ENCODE measurements at regions of chr17 and their contacts with region 1.

Region 1: DNA sequence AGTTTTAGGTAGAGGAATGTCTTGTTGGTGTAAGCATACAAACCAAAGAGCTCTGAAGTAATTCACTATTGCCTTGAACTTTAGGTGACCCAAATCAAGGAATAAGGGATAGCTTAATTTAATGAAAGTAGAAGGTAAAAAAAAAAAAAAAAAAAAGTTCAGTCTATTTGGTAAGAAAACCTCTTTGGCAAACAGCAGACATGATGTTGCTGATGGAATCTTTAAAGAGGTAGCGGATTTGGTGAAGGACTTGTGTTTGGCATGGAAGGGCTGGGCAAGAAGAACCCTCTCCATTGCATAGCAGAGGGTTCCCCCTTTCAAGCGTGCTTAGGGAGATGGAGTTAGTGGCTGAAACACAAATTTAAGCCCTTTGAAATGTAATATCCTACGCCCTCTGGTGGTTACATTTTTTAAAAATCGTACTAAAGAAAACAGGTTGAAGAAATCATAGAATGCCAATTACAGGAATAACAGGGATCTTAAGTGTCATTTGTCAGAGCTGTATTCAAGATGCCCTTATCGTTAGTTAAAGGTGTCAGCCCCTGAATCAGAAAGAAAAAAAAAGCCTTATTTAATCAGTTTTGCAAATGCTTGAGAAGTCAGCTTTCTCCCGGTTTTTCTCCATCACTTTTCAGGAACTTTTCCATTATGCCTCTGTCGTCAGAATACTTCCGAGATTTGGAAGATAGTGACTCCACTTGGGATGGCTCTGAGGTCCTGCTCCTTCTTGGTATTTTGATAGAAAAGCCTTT is 383.1 kb downstream of the KCNJ2 start:
- DNase-seq: peak in 1 of 2 donors; percentile 8
- ATAC-seq: peak; percentile 55 to 83 (median 66)
- H3K4me3 ChIP-seq: peak overlapping the region in 3 of 10 donors; percentile 8 to 22 (median 20)
- H3K27ac ChIP-seq: peak overlapping the region in 2 of 10 donors; percentile 10 to 29
- H3K4me1 ChIP-seq: peaks cover 0 to 4% (median 0%) of the 10 kb centered on the region in 9 donors
- H3K27me3 ChIP-seq: no peaks in the 10 kb centered on the region
- CTCF ChIP-seq: peak; percentile 34 to 72 (median 60)

Region 2: GRCh38 chr17:69567130-69567529 is 985.3 kb before region 1 on chr17:
- intact Hi-C with region 1: loop called in 6 of 10 experiments (anchors 5 to 10 kb)
- DNase-seq: no peak
- ATAC-seq: no peak
- H3K4me3 ChIP-seq: no peak overlapping the region
- H3K27ac ChIP-seq: no peak overlapping the region
- H3K4me1 ChIP-seq: peaks cover 0 to 9% (median 0%) of the 10 kb centered on the region in 9 donors
- H3K27me3 ChIP-seq: no peaks in the 10 kb centered on the region
- CTCF ChIP-seq: no peak

Region 3: DNA sequence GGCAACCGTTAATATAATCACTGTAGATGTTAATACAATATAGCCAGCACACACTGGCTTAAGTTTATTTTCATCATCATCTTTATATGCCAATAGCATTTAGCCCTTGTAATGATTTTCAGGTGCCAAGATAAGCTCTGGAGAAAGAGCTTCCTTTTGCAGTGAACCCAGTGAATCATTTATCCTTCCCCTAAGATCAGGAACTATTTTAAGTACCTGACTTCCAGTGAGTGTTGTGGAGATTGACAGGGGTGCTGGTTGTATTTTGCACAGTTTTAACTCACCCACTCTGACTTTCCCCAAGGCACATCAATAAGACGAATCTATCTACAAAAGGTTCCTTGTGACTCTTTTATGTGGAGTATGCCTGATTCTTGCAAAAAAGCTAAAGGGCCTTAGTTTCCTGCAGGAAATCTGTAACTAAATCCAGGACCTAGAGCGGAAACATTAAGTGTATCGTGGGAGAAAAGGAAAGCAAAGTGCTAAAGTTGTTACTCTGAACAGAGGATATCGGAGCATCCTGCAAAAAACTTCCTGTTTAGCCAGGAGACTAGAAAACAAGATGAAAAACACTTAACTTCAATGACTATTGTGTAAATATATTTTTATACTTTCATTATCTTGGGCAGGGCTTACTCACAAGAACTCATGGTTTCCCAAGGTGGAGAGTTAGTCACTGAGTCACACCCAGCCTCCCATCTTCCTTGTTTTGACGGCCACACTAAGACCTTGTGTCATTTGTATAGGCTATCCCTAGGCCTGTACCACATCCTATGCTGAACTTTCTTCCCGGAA is 954.3 kb before region 1 on chr17:
- intact Hi-C with region 1: loop called in 3 of 10 experiments (anchors 10 kb)
- DNase-seq: no peak
- ATAC-seq: peak in 6 of 8 donors; percentile 23 to 89 (median 66)
- H3K4me3 ChIP-seq: no peak overlapping the region
- H3K27ac ChIP-seq: peak overlapping the region in 7 of 10 donors; percentile 23 to 62 (median 49)
- H3K4me1 ChIP-seq: peaks cover 0 to 15% (median 5%) of the 10 kb centered on the region in 9 donors
- H3K27me3 ChIP-seq: peaks cover 0 to 4% (median 0%) of the 10 kb centered on the region in 7 donors
- CTCF ChIP-seq: no peak

Region 4: DNA sequence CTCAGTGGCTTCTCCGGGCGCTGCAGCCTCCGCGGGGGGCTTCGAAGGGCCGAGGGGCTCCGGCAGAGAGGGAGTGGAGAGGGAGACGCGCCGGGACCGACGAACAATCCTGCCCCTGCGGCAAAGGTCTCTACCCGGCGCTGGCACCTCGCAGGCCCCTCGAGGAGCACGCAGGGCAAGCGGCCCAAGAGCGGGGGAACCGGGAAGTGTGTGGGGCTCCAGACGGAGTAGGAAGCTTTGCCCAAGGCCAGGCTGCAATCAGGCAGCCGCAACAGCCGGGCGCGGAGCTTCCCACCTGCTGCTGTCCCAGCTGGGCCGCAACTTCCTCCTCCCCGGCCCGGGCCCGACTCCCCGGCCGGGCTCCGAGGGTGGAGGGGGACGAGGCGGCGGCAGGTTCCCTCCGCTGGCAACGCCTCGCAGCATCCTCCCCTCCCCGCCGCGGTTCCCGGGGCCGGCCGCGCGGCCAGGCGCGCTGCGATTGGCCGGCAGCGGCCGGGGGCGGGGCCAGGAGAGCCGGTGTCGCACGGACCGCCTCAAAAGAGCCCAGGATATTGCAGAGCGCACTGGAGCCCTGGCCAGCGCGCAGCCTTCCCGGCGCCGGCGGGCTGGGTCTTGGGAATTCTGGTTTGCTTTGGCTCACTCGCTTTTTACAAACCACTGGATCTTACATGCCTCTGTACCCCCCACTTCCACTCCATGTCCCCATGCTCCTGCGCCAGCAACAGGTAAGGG is 383.3 kb before region 1 on chr17 and contains the start of gene KCNJ2:
- intact Hi-C with region 1: loop called in 7 of 10 experiments (anchors 5 to 10 kb)
- DNase-seq: peak; percentile 88 to 91
- ATAC-seq: peak; percentile 87 to 97 (median 94)
- H3K4me3 ChIP-seq: peak within 1 kb of the TSS; percentile 62 to 97 (median 78)
- H3K27ac ChIP-seq: peak within 1 kb of the TSS; percentile 89 to 98 (median 95)
- H3K4me1 ChIP-seq: peaks cover 0 to 29% (median 14%) of the 10 kb centered on the region in 9 donors
- H3K27me3 ChIP-seq: no peaks in the 10 kb centered on the region
- CTCF ChIP-seq: no peak
- total RNA-seq, gene KCNJ2: 16.7 to 76.0 (median 46.8) TPM

Region 5: DNA sequence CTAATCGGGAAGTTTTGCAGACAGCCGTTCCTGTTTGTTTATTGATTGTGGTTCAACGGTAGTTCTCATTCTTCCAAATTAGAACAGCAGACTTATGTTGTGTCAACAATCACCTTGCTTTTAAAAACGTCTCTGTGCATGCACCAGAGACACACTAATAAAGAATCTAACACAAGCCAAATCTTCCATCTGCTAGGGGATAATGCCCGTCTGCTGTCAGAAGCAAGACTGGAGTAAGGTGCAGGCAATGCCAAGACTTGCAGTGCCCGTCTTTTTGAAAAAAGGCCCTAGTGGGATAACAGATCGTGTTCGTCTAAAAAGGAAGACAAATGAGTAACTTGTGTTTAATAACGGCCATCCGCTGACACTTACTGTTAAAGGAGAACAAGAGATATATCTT is 224.7 kb before region 1 on chr17:
- intact Hi-C with region 1: no loop called
- DNase-seq: no peak
- ATAC-seq: no peak
- H3K4me3 ChIP-seq: no peak overlapping the region
- H3K27ac ChIP-seq: no peak overlapping the region
- H3K4me1 ChIP-seq: peaks cover 0 to 3% (median 0%) of the 10 kb centered on the region in 9 donors
- H3K27me3 ChIP-seq: no peaks in the 10 kb centered on the region
- CTCF ChIP-seq: no peak